ENCODE measurements at regions of chr10 and their contacts with region 1.

Region 1: GRCh38 chr10:68720793-68721672 is at the start of gene CCAR1:
- DNase-seq: peak; percentile 95 to 97 (median 97)
- H3K4me3 ChIP-seq: peak within 1 kb of the TSS; percentile 26 to 84
- H3K4me3 Mint-ChIP-seq: peak within 1 kb of the TSS; percentile 94 to 99 (median 98)
- H3K27ac ChIP-seq: peak within 1 kb of the TSS; percentile 94
- H3K27ac Mint-ChIP-seq: peak within 1 kb of the TSS; percentile 98 to 100 (median 99)
- H3K4me1 ChIP-seq: peaks cover 10% of the 10 kb centered on the region
- H3K4me1 Mint-ChIP-seq: peaks cover 13 to 23% (median 16%) of the 10 kb centered on the region in 4 donors
- H3K27me3 ChIP-seq: no peaks in the 10 kb centered on the region
- H3K27me3 Mint-ChIP-seq: no peaks in the 10 kb centered on the region
- total RNA-seq, gene CCAR1: 96.3 to 97.3 TPM

Region 2: GRCh38 chr10:67764012-67764822 is 956.8 kb before region 1 on chr10:
- CTCF ChIA-PET with region 1: no interaction called
- POLR2A ChIA-PET with region 1: no interaction called
- intact Hi-C with region 1: loop called (anchors 2 kb)
- DNase-seq: peak; percentile 96 to 99 (median 97)
- H3K4me3 ChIP-seq: peak overlapping the region; percentile 58 to 98
- H3K4me3 Mint-ChIP-seq: peak overlapping the region; percentile 90 to 98 (median 95)
- H3K27ac ChIP-seq: peak overlapping the region; percentile 73
- H3K27ac Mint-ChIP-seq: peak overlapping the region; percentile 98 to 100 (median 99)
- H3K4me1 ChIP-seq: peaks cover 14% of the 10 kb centered on the region
- H3K4me1 Mint-ChIP-seq: peaks cover 9 to 28% (median 14%) of the 10 kb centered on the region in 4 donors
- H3K27me3 ChIP-seq: no peaks in the 10 kb centered on the region
- H3K27me3 Mint-ChIP-seq: peaks cover 4 to 9% of the 10 kb centered on the region in 2 donors

Region 3: DNA sequence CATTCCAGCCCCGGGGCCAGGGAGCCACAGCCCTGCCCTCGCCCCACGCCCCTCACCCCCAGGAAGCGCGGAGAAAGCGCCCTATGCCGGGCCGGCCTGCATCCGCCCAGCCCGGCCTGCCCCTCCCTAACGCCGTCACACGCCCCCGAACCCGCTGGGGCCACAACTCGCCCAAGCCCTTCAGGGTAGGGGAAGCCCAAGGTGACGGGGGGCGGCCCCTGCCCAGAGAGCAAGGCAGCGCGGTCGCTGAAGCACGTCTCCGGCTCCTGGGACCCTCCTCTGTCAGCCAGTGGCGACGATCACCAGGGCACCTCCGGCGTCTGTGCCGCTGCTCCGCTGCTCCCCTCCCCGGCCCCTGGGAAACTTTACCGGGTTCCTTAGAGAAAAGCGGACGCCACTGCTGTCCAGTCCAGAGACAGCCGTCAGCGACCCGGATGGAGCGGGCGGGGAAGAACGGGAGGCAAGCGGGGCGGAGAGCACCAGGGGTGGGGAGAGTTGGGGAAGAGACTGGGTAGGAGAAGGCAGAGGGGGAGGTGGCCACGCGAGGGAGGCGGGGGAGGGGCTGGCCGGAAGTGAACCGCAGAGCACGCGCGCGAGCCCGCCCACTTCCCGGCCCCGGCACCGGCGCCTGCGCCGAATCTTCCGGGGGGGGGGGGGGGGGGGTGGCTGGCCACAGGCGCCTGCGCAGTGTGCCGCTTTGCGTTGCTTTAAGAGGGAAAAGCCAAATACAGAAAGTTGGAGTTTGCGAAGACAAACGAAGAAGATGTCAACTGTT is 646.1 kb before region 1 on chr10 and contains the start of gene HERC4:
- CTCF ChIA-PET with region 1: no interaction called
- POLR2A ChIA-PET with region 1: no interaction called
- intact Hi-C with region 1: loop called (anchors 10 kb)
- DNase-seq: peak; percentile 88 to 92 (median 89)
- H3K4me3 ChIP-seq: peak within 1 kb of the TSS; percentile 53 to 99
- H3K4me3 Mint-ChIP-seq: peak within 1 kb of the TSS; percentile 95 to 99 (median 98)
- H3K27ac ChIP-seq: peak within 1 kb of the TSS; percentile 98
- H3K27ac Mint-ChIP-seq: peak within 1 kb of the TSS; percentile 91 to 98 (median 95)
- H3K4me1 ChIP-seq: peaks cover 39% of the 10 kb centered on the region
- H3K4me1 Mint-ChIP-seq: peaks cover 30 to 48% (median 39%) of the 10 kb centered on the region in 4 donors
- H3K27me3 ChIP-seq: no peaks in the 10 kb centered on the region
- H3K27me3 Mint-ChIP-seq: no peaks in the 10 kb centered on the region
- total RNA-seq, gene HERC4: 104 to 117 TPM

Region 4: GRCh38 chr10:68526626-68527307 is 194.3 kb before region 1 on chr10:
- CTCF ChIA-PET with region 1: no interaction called
- POLR2A ChIA-PET with region 1: interaction called, 3 read pairs
- intact Hi-C with region 1: loop called (anchors 2 kb)
- DNase-seq: peak in 1 of 5 donors; percentile 1
- H3K4me3 ChIP-seq: peak overlapping the region; percentile 93
- H3K4me3 Mint-ChIP-seq: peak overlapping the region; percentile 84 to 94 (median 90)
- H3K27ac ChIP-seq: peak overlapping the region; percentile 94
- H3K27ac Mint-ChIP-seq: peak overlapping the region; percentile 82 to 98 (median 97)
- H3K4me1 ChIP-seq: peaks cover 8% of the 10 kb centered on the region
- H3K4me1 Mint-ChIP-seq: peaks cover 5 to 13% (median 7%) of the 10 kb centered on the region in 4 donors
- H3K27me3 ChIP-seq: no peaks in the 10 kb centered on the region
- H3K27me3 Mint-ChIP-seq: no peaks in the 10 kb centered on the region

Region 5: DNA sequence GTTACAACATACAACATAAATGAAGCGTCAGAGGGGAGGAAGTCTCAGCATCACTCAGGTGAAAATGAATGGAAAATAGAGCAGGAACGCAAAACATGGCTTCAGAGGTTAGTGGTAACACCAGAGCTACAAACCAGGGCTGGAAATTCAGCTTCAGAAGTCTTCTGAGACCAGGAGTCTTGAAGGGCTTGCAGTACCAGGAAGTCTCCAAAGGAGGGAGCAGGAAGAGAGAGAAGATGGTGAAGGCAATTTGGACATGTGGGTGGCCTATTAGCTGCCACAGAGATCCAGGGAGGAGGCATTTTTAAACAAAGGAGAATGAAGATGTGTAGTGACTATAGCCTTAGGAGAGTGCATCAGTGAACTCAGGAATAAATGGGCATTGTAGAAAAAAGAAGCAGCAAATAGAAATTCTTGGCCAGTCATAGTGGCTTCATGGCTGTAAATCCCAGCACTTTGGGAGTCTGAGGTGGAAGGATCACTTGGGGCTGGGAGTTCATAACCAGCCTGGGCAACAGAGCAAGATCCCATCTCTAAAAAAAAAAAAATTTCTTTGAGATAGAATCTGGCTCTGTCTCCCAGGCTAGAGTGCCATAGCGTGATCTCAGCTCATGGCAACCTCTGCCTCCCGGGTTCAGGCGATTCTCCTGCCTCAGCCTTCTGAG is 170.2 kb before region 1 on chr10:
- CTCF ChIA-PET with region 1: interaction called, 14 read pairs
- POLR2A ChIA-PET with region 1: no interaction called
- intact Hi-C with region 1: loop called (anchors 10 kb)
- DNase-seq: peak; percentile 39 to 55 (median 45)
- H3K4me3 ChIP-seq: no peak overlapping the region
- H3K4me3 Mint-ChIP-seq: no peak overlapping the region
- H3K27ac ChIP-seq: no peak overlapping the region
- H3K27ac Mint-ChIP-seq: peak overlapping the region in 1 of 7 donors; percentile 53
- H3K4me1 ChIP-seq: no peaks in the 10 kb centered on the region
- H3K4me1 Mint-ChIP-seq: peaks cover 0 to 4% (median 2%) of the 10 kb centered on the region in 4 donors
- H3K27me3 ChIP-seq: no peaks in the 10 kb centered on the region
- H3K27me3 Mint-ChIP-seq: peaks cover 2 to 3% of the 10 kb centered on the region in 2 donors

Region 6: DNA sequence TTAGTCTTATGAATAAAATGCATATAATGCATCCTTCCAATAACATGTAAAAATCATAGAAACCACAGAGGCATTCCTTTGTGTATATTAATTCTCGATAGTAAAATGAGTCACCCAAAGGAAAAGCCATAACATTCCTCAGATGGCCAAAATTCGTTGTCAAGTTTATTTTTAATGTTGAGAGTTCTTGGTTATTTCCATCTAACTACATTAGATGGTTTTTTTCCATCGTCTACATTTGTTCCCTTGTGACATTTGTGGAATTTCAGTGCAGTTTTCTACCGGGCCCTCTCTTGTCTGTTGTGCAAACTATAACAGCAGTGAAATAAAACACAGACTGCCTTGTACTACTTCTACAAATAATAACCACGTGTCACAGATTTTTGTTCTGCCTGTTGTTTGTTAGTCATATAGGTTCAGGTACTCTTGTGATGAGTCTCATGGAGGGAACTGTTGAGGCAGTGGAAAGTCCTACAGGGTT is 54.7 kb before region 1 on chr10:
- CTCF ChIA-PET with region 1: no interaction called
- POLR2A ChIA-PET with region 1: no interaction called
- intact Hi-C with region 1: no loop called
- DNase-seq: no peak
- H3K4me3 ChIP-seq: no peak overlapping the region
- H3K4me3 Mint-ChIP-seq: no peak overlapping the region
- H3K27ac ChIP-seq: no peak overlapping the region
- H3K27ac Mint-ChIP-seq: no peak overlapping the region
- H3K4me1 ChIP-seq: no peaks in the 10 kb centered on the region
- H3K4me1 Mint-ChIP-seq: peaks cover 0 to 2% (median under 1%) of the 10 kb centered on the region in 4 donors
- H3K27me3 ChIP-seq: no peaks in the 10 kb centered on the region
- H3K27me3 Mint-ChIP-seq: no peaks in the 10 kb centered on the region

Region 7: DNA sequence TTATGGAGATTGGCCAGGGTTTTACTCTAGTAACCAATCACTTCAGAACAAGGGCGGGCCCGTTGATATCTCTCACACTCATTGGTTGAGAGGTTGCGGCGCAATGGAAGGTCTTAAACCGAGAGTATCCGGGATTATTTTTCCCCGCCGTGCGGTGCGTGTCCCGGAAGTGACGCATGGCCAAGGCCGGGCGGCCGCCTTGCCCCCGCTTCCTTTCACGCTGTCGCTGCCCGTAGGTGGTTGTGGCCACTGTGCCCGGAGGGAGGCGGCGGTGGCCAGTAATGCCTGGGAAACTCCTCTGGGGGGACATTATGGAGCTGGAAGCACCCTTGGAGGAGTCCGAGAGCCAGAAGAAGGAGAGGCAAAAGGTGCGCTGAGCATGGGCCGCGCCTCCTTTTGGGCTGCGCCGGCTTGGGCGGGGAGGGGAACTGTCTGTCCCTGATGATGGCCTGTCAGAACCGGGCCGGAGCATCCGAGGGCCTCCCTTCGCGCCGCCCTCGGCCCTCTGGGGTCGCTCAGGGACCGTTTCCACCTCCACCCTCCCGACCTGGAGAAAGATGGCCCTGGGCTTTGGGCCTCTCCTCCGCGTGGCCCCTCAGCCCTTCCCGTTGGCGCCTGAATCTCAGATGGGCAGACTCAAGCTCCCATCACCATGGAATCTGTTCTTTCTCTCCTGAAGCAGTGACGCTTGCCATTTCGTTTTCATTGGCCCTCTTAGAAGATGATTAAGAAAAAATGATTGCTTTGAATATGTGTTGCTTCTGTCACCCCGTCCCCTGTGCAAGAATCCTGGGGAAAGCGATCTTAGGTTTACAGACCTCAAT is 180.3 kb after region 1 on chr10 and contains the start of gene DDX50:
- CTCF ChIA-PET with region 1: no interaction called
- POLR2A ChIA-PET with region 1: interaction called, 8 read pairs
- intact Hi-C with region 1: loop called (anchors 1 kb)
- DNase-seq: peak; percentile 94 to 98 (median 96)
- H3K4me3 ChIP-seq: peak within 1 kb of the TSS; percentile 58 to 85
- H3K4me3 Mint-ChIP-seq: peak within 1 kb of the TSS; percentile 97 to 99 (median 98)
- H3K27ac ChIP-seq: peak within 1 kb of the TSS; percentile 97
- H3K27ac Mint-ChIP-seq: peak within 1 kb of the TSS; percentile 99 to 100 (median 99)
- H3K4me1 ChIP-seq: peaks cover 37% of the 10 kb centered on the region
- H3K4me1 Mint-ChIP-seq: peaks cover 25 to 61% (median 40%) of the 10 kb centered on the region in 4 donors
- H3K27me3 ChIP-seq: no peaks in the 10 kb centered on the region
- H3K27me3 Mint-ChIP-seq: no peaks in the 10 kb centered on the region
- total RNA-seq, gene DDX50: 41.1 to 41.9 TPM

Measured in CD4-positive, alpha-beta memory T cell (primary cell).